ENCODE measurements at regions of chr6 and their contacts with region 1.

Region 1: GRCh38 chr6:168956884-168957730 is 296.5 kb downstream of the THBS2 start:
- DNase-seq: peak; percentile 75
- H3K4me3 Mint-ChIP-seq: no peak overlapping the region
- H3K27ac Mint-ChIP-seq: no peak overlapping the region
- H3K4me1 Mint-ChIP-seq: peaks cover 11% of the 10 kb centered on the region
- H3K27me3 Mint-ChIP-seq: no peaks in the 10 kb centered on the region
- CTCF ChIP-seq: peak; percentile 91

Region 2: GRCh38 chr6:168967281-168967925 is 10.3 kb after region 1 on chr6:
- CTCF ChIA-PET with region 1: interaction called, 11 read pairs
- POLR2A ChIA-PET with region 1: no interaction called
- intact Hi-C with region 1: no loop called
- DNase-seq: no peak
- H3K4me3 Mint-ChIP-seq: no peak overlapping the region
- H3K27ac Mint-ChIP-seq: no peak overlapping the region
- H3K4me1 Mint-ChIP-seq: no peaks in the 10 kb centered on the region
- H3K27me3 Mint-ChIP-seq: no peaks in the 10 kb centered on the region
- CTCF ChIP-seq: no peak

Region 3: GRCh38 chr6:169326067-169326799 is 369.1 kb after region 1 on chr6:
- CTCF ChIA-PET with region 1: no interaction called
- POLR2A ChIA-PET with region 1: no interaction called
- intact Hi-C with region 1: loop called (anchors 1 kb)
- DNase-seq: peak; percentile 69
- H3K4me3 Mint-ChIP-seq: no peak overlapping the region
- H3K27ac Mint-ChIP-seq: no peak overlapping the region
- H3K4me1 Mint-ChIP-seq: peaks cover 12% of the 10 kb centered on the region
- H3K27me3 Mint-ChIP-seq: no peaks in the 10 kb centered on the region
- CTCF ChIP-seq: peak; percentile 42

Region 4: DNA sequence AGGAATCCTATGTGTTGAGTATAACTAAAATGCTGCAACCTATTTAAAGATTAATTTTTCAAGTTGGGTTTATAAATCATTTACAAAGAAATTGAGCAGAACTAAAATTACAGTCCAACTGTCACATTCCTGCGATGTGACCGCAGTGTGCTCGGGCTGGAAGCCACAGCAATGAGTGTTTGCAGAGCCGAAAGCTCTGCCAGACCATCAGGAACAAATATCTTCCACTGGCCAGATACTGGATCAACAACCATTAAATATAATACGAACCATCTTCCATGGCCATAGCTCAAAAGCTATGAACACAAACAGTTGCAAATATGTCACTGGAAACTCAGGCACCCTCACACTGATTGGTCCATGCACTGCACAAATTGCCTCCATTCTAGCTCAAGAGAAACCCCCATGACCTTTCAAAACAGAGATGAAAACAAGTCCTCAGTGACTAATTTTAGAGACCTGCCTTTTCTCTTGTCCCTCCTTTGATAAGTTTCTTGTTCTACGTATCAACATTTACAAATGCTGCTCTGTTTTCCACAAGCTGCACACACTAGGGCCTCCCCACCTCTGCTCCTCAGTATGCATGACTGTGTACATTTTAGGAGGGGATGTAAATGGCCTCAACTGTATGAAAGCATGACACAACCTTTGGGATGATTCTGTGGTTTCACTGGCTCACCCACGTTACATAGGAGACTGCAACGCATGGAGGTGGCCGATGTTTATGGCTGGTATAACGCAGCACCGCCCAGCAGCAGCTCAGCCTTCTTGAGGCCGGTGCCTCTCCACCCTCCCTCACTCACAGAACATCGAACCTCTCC is 573.0 kb after region 1 on chr6:
- CTCF ChIA-PET with region 1: interaction called, 11 read pairs
- POLR2A ChIA-PET with region 1: no interaction called
- intact Hi-C with region 1: no loop called
- DNase-seq: no peak
- H3K4me3 Mint-ChIP-seq: no peak overlapping the region
- H3K27ac Mint-ChIP-seq: no peak overlapping the region
- H3K4me1 Mint-ChIP-seq: no peaks in the 10 kb centered on the region
- H3K27me3 Mint-ChIP-seq: no peaks in the 10 kb centered on the region
- CTCF ChIP-seq: no peak

Region 5: GRCh38 chr6:169831450-169832246 is 874.5 kb after region 1 on chr6:
- CTCF ChIA-PET with region 1: interaction called, 5 read pairs
- POLR2A ChIA-PET with region 1: no interaction called
- intact Hi-C with region 1: loop called (anchors 5 kb)
- DNase-seq: peak; percentile 66
- H3K4me3 Mint-ChIP-seq: no peak overlapping the region
- H3K27ac Mint-ChIP-seq: no peak overlapping the region
- H3K4me1 Mint-ChIP-seq: peaks cover 6% of the 10 kb centered on the region
- H3K27me3 Mint-ChIP-seq: peaks cover 73% of the 10 kb centered on the region
- CTCF ChIP-seq: peak; percentile 90